Tibial artery (tissue), 4 donors: ENCODE measurements at regions of chr16 and their contacts with region 1.

Region 1: DNA sequence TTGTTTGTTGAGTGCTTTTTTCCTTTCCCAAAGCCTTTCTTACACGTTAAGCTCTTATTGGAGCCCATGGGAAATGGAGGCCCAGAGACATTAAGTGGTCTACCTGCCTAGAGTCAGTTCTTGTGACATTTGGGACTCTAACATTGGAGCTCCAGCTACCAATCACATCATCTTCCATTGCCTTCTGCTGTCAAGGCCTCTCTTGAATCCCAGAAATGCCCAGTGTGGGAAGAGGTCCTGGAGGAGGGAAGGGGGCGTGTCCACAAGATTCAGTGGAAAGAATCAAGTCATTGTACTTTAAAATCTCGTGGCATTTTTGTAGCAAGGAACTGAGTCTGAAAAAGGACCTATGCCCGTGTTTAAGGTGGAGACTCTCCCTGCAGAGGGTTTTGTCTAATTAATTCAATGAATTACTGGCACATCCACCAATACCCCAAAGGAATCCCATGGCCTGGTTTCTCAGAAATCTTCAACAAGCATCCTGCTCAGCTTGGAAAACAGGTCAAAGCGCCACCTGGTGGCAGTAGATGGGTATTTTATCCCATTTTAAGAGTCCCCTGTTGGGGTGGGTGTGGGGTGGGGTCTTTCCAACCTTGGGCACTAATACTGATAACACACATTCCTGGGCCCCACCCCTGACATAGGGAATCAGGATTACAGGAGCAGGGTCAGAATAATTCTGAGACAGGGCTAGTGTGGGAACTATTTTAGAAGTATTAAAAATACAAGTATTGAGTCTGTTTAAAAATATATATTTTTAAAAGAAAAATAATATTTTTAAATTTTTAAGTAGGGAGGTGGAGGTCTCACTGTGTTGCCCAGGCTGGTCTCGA is 24.6 kb downstream of the GPT2 start:
- DNase-seq: peak in 1 of 2 donors; percentile 33
- H3K4me3 ChIP-seq: no peak overlapping the region
- H3K27ac ChIP-seq: no peak overlapping the region
- H3K4me1 ChIP-seq: peaks cover 0 to 4% (median 0%) of the 10 kb centered on the region in 4 donors
- H3K27me3 ChIP-seq: no peaks in the 10 kb centered on the region
- CTCF ChIP-seq: peak; percentile 55 to 76

Region 2: DNA sequence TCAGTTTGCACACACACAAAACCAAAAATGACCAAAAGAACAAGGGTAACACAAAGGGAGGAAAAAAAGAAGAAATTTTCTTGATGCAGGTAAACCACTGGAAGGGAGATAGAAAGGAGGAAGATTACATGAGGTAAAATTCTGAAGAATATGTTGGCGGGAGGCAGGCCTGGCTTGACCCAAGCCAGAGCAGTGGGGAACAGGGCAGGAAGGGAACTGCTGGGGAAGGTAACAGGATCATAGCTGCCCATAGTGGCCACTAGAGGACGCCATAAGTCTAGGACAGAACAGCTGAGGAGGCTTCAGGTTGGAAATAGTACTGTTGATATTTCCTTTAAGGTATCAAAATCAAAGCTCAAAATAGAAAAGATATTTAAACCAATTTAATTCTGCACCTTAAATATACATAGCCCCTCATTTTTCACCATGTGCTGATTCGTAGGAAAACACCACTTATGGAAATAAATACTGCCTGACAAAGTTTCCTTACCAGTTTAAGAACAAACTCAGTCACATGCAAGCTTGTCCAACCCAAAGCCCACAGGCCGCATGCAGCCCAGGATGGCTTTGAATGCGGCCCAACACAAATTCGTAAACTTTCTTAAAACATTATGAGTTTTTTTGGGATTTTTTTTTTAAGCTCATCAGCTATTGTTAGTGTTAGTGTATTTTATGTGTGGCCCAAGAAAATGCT is 235.3 kb before region 1 on chr16:
- intact Hi-C with region 1: loop called (anchors 5 kb)
- DNase-seq: peak in 1 of 2 donors; percentile 31
- H3K4me3 ChIP-seq: no peak overlapping the region
- H3K27ac ChIP-seq: no peak overlapping the region
- H3K4me1 ChIP-seq: no peaks in the 10 kb centered on the region
- H3K27me3 ChIP-seq: no peaks in the 10 kb centered on the region
- CTCF ChIP-seq: peak; percentile 54 to 70

Region 3: GRCh38 chr16:46853713-46854443 is 54.9 kb before region 1 on chr16:
- intact Hi-C with region 1: loop called (anchors 2 kb)
- DNase-seq: peak; percentile 51 to 73
- H3K4me3 ChIP-seq: no peak overlapping the region
- H3K27ac ChIP-seq: no peak overlapping the region
- H3K4me1 ChIP-seq: peaks cover 0 to 10% (median 1%) of the 10 kb centered on the region in 4 donors
- H3K27me3 ChIP-seq: no peaks in the 10 kb centered on the region
- CTCF ChIP-seq: peak; percentile 63 to 77